ENCODE measurements at regions of chr11 and their contacts with region 1.

Region 1: GRCh38 chr11:66970808-66971442 is 4.2 kb upstream of the C11orf86 start:
- DNase-seq: peak; percentile 99
- H3K4me3 ChIP-seq: no peak overlapping the region
- H3K27ac ChIP-seq: peak overlapping the region; percentile 98
- H3K27me3 ChIP-seq: no peaks in the 10 kb centered on the region
- CTCF ChIP-seq: no peak

Region 2: DNA sequence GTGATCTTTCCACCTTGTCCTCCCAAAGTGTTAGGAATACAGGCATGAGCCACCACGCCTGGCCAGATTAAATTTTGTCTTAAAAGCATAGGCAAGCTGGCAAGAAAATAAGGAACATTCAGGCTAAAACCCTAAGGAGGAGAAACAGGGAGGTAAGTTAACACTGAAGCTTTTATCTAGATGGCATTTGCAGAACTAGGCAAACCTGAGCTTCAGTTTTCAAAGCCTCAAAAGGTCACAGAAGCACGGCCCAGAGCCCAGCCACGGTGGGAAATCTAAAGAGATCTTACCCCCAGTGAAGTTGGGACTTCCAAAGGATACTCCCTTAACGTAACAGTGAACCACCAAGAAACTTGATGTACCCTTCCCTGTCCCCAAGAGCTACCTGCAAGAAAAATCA is 41.2 kb before region 1 on chr11:
- CTCF ChIA-PET with region 1: no interaction called
- POLR2A ChIA-PET with region 1: interaction called, 15 read pairs
- DNase-seq: no peak
- H3K4me3 ChIP-seq: no peak overlapping the region
- H3K27ac ChIP-seq: no peak overlapping the region
- H3K27me3 ChIP-seq: no peaks in the 10 kb centered on the region
- CTCF ChIP-seq: no peak

Region 3: DNA sequence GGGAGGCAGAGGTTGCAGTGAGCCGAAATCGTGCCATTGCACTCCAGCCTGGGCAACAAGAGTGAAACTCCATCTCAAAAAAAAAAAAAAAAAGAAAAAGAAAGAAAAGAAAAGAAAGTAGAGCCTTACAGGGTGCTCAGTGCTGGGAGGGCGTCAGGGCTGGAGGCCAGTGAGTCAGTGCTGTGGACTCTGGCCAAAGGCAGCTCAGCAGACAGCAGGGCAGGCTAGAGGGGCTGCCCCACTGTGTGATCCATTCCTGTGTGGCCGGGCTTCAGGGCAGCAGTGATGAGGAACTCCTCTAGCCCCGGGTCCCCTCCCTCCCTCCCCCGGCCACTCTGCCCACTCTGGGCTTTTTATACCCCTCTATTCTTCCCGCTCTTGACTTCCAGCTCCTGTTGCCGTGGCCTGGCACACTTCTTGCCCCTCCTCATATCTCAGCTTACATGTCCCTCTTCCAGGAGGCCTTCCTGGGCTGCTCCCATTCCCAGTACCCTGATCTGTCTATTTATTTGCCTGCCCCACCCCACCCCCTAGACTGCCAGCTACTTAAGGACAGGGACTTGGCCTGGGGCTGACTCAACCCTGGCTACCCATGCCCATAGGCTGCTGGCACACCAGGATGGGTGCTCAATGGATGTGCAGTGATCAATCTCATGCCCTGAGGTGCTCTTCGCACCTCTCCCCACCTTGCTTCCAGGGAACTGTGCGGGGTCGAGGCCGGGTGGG is 62.1 kb after region 1 on chr11:
- CTCF ChIA-PET with region 1: no interaction called
- POLR2A ChIA-PET with region 1: interaction called, 10 read pairs
- DNase-seq: peak; percentile 75
- H3K4me3 ChIP-seq: no peak overlapping the region
- H3K27ac ChIP-seq: peak overlapping the region; percentile 85
- H3K27me3 ChIP-seq: peaks cover 2% of the 10 kb centered on the region
- CTCF ChIP-seq: no peak

Region 4: GRCh38 chr11:67051494-67051893 is 80.6 kb after region 1 on chr11:
- CTCF ChIA-PET with region 1: interaction called, 11 read pairs
- POLR2A ChIA-PET with region 1: no interaction called
- DNase-seq: no peak
- H3K4me3 ChIP-seq: no peak overlapping the region
- H3K27ac ChIP-seq: no peak overlapping the region
- H3K27me3 ChIP-seq: no peaks in the 10 kb centered on the region
- CTCF ChIP-seq: no peak

Measured in AG04450 (cell line).